Naive thymus-derived CD4-positive, alpha-beta T cell (primary cell): ENCODE measurements at regions of chr12 and their contacts with region 1.

Region 1: DNA sequence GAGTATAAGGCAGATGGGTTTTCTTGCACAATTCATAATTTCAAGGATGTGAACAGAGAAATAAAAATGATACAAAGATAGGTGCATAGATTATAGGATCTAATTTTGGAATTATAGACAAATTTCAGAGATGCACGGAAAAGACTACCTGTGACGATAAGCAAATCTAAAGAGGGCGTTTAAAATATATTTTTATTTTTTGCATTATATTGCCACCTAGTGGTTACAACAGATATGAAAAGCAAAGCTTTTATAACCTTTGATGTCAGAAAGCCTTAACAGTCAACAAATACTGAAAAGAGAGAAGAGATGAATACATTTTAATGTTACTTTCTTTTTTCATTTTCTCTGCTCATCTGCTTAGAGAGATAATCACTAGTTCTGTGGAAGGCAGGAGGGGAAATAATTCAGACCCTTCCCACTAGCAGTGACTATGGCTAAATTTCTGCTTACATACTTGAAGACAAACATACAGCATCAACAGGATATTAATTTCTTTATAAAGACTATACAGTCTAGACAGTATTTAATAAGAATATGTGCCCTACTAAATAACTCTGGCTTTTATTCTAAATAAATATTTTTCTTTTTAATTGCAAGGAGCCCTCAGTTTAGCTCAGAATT is 46.3 kb downstream of the NTS start:
- DNase-seq: peak in 5 of 9 donors; percentile 2 to 25 (median 10)
- ATAC-seq: no peak
- H3K4me3 ChIP-seq: no peak overlapping the region
- H3K4me3 Mint-ChIP-seq: no peak overlapping the region
- H3K27ac ChIP-seq: no peak overlapping the region
- H3K27ac Mint-ChIP-seq: no peak overlapping the region
- H3K4me1 ChIP-seq: no peaks in the 10 kb centered on the region
- H3K4me1 Mint-ChIP-seq: no peaks in the 10 kb centered on the region
- H3K27me3 ChIP-seq: no peaks in the 10 kb centered on the region
- H3K27me3 Mint-ChIP-seq: no peaks in the 10 kb centered on the region

Region 2: GRCh38 chr12:85076688-85077430 is 843.6 kb before region 1 on chr12:
- CTCF ChIA-PET with region 1: no interaction called
- POLR2A ChIA-PET with region 1: no interaction called
- intact Hi-C with region 1: loop called in 1 of 2 experiments (anchors 5 kb)
- DNase-seq: no peak
- ATAC-seq: no peak
- H3K4me3 ChIP-seq: no peak overlapping the region
- H3K4me3 Mint-ChIP-seq: no peak overlapping the region
- H3K27ac ChIP-seq: no peak overlapping the region
- H3K27ac Mint-ChIP-seq: no peak overlapping the region
- H3K4me1 ChIP-seq: no peaks in the 10 kb centered on the region
- H3K4me1 Mint-ChIP-seq: no peaks in the 10 kb centered on the region
- H3K27me3 ChIP-seq: no peaks in the 10 kb centered on the region
- H3K27me3 Mint-ChIP-seq: no peaks in the 10 kb centered on the region

Region 3: GRCh38 chr12:85468356-85469157 is 451.9 kb before region 1 on chr12:
- CTCF ChIA-PET with region 1: interaction called, 3 read pairs
- POLR2A ChIA-PET with region 1: no interaction called
- intact Hi-C with region 1: loop called in 1 of 2 experiments (anchors 1 kb)
- DNase-seq: peak in 6 of 9 donors; percentile 4 to 27 (median 14)
- ATAC-seq: peak; percentile 60
- H3K4me3 ChIP-seq: no peak overlapping the region
- H3K4me3 Mint-ChIP-seq: peak overlapping the region; percentile 48 to 92 (median 82)
- H3K27ac ChIP-seq: no peak overlapping the region
- H3K27ac Mint-ChIP-seq: peak overlapping the region in 5 of 9 donors; percentile 6 to 67 (median 45)
- H3K4me1 ChIP-seq: no peaks in the 10 kb centered on the region
- H3K4me1 Mint-ChIP-seq: peaks cover 0 to 18% (median 15%) of the 10 kb centered on the region in 7 donors
- H3K27me3 ChIP-seq: no peaks in the 10 kb centered on the region
- H3K27me3 Mint-ChIP-seq: peaks cover 0 to 6% (median 3%) of the 10 kb centered on the region in 5 donors

Region 4: GRCh38 chr12:85575120-85576096 is 345.0 kb before region 1 on chr12:
- CTCF ChIA-PET with region 1: no interaction called
- POLR2A ChIA-PET with region 1: no interaction called
- intact Hi-C with region 1: loop called in 1 of 2 experiments (anchors 2 kb)
- DNase-seq: peak in 1 of 9 donors; percentile 3
- ATAC-seq: no peak
- H3K4me3 ChIP-seq: no peak overlapping the region
- H3K4me3 Mint-ChIP-seq: no peak overlapping the region
- H3K27ac ChIP-seq: no peak overlapping the region
- H3K27ac Mint-ChIP-seq: no peak overlapping the region
- H3K4me1 ChIP-seq: no peaks in the 10 kb centered on the region
- H3K4me1 Mint-ChIP-seq: no peaks in the 10 kb centered on the region
- H3K27me3 ChIP-seq: no peaks in the 10 kb centered on the region
- H3K27me3 Mint-ChIP-seq: no peaks in the 10 kb centered on the region

Region 5: GRCh38 chr12:86091681-86092080 is 171.2 kb after region 1 on chr12:
- CTCF ChIA-PET with region 1: no interaction called
- POLR2A ChIA-PET with region 1: no interaction called
- intact Hi-C with region 1: no loop called
- DNase-seq: no peak
- ATAC-seq: no peak
- H3K4me3 ChIP-seq: no peak overlapping the region
- H3K4me3 Mint-ChIP-seq: no peak overlapping the region
- H3K27ac ChIP-seq: no peak overlapping the region
- H3K27ac Mint-ChIP-seq: no peak overlapping the region
- H3K4me1 ChIP-seq: no peaks in the 10 kb centered on the region
- H3K4me1 Mint-ChIP-seq: no peaks in the 10 kb centered on the region
- H3K27me3 ChIP-seq: no peaks in the 10 kb centered on the region
- H3K27me3 Mint-ChIP-seq: no peaks in the 10 kb centered on the region